ENCODE measurements at regions of chr1 and their contacts with region 1.

Region 1: GRCh38 chr1:206544562-206545257 is 37.4 kb downstream of the RASSF5 start:
- DNase-seq: peak; percentile 68 to 89 (median 81)
- ATAC-seq: peak; percentile 96
- H3K4me3 ChIP-seq: no peak overlapping the region
- H3K4me3 Mint-ChIP-seq: no peak overlapping the region
- H3K27ac ChIP-seq: no peak overlapping the region
- H3K27ac Mint-ChIP-seq: no peak overlapping the region
- H3K4me1 ChIP-seq: peaks cover 11% of the 10 kb centered on the region
- H3K4me1 Mint-ChIP-seq: peaks cover 24% of the 10 kb centered on the region
- H3K27me3 ChIP-seq: no peaks in the 10 kb centered on the region
- H3K27me3 Mint-ChIP-seq: no peaks in the 10 kb centered on the region
- CTCF ChIP-seq: peak; percentile 95

Region 2: GRCh38 chr1:206461602-206462455 is 82.9 kb before region 1 on chr1:
- CTCF ChIA-PET with region 1: interaction called, 3 read pairs
- POLR2A ChIA-PET with region 1: no interaction called
- intact Hi-C with region 1: loop called in 1 of 2 experiments (anchors 2 kb)
- DNase-seq: peak; percentile 49 to 86 (median 72)
- ATAC-seq: peak; percentile 87
- H3K4me3 ChIP-seq: no peak overlapping the region
- H3K4me3 Mint-ChIP-seq: no peak overlapping the region
- H3K27ac ChIP-seq: no peak overlapping the region
- H3K27ac Mint-ChIP-seq: peak overlapping the region; percentile 16
- H3K4me1 ChIP-seq: peaks cover 25% of the 10 kb centered on the region
- H3K4me1 Mint-ChIP-seq: peaks cover 17% of the 10 kb centered on the region
- H3K27me3 ChIP-seq: no peaks in the 10 kb centered on the region
- H3K27me3 Mint-ChIP-seq: no peaks in the 10 kb centered on the region
- CTCF ChIP-seq: peak; percentile 80

Region 3: DNA sequence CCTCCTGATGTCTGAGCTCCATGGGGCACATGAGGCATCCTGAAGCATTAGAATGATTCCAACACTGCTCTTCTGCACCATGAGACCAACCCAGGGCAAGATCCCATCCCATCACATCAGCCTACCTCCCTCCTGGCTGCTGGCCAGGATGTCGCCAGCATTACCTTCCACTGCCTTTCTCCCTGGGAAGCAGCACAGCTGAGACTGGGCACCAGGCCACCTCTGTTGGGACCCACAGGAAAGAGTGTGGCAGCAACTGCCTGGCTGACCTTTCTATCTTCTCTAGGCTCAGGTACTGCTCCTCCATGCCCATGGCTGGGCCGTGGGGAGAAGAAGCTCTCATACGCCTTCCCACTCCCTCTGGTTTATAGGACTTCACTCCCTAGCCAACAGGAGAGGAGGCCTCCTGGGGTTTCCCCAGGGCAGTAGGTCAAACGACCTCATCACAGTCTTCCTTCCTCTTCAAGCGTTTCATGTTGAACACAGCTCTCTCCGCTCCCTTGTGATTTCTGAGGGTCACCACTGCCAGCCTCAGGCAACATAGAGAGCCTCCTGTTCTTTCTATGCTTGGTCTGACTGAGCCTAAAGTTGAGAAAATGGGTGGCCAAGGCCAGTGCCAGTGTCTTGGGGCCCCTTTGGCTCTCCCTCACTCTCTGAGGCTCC is 48.4 kb before region 1 on chr1:
- CTCF ChIA-PET with region 1: interaction called, 6 read pairs
- POLR2A ChIA-PET with region 1: no interaction called
- intact Hi-C with region 1: loop called (anchors 5 to 10 kb)
- DNase-seq: peak in 1 of 14 experiments; percentile 29
- ATAC-seq: no peak
- H3K4me3 ChIP-seq: no peak overlapping the region
- H3K4me3 Mint-ChIP-seq: no peak overlapping the region
- H3K27ac ChIP-seq: peak overlapping the region in 1 of 2 donors; percentile 33
- H3K27ac Mint-ChIP-seq: peak overlapping the region; percentile 51
- H3K4me1 ChIP-seq: peaks cover 4% of the 10 kb centered on the region
- H3K4me1 Mint-ChIP-seq: no peaks in the 10 kb centered on the region
- H3K27me3 ChIP-seq: no peaks in the 10 kb centered on the region
- H3K27me3 Mint-ChIP-seq: no peaks in the 10 kb centered on the region
- CTCF ChIP-seq: no peak

Region 4: GRCh38 chr1:206575165-206575893 is 30.6 kb after region 1 on chr1:
- CTCF ChIA-PET with region 1: interaction called, 236 read pairs
- POLR2A ChIA-PET with region 1: interaction called, 14 read pairs
- intact Hi-C with region 1: no loop called
- DNase-seq: peak in 9 of 14 experiments; percentile 26 to 88 (median 56)
- ATAC-seq: peak; percentile 63
- H3K4me3 ChIP-seq: peak overlapping the region; percentile 29
- H3K4me3 Mint-ChIP-seq: peak overlapping the region; percentile 70
- H3K27ac ChIP-seq: peak overlapping the region; percentile 93 to 95
- H3K27ac Mint-ChIP-seq: peak overlapping the region; percentile 86
- H3K4me1 ChIP-seq: peaks cover 97% of the 10 kb centered on the region
- H3K4me1 Mint-ChIP-seq: peaks cover 98% of the 10 kb centered on the region
- H3K27me3 ChIP-seq: no peaks in the 10 kb centered on the region
- H3K27me3 Mint-ChIP-seq: no peaks in the 10 kb centered on the region
- CTCF ChIP-seq: no peak

Region 5: DNA sequence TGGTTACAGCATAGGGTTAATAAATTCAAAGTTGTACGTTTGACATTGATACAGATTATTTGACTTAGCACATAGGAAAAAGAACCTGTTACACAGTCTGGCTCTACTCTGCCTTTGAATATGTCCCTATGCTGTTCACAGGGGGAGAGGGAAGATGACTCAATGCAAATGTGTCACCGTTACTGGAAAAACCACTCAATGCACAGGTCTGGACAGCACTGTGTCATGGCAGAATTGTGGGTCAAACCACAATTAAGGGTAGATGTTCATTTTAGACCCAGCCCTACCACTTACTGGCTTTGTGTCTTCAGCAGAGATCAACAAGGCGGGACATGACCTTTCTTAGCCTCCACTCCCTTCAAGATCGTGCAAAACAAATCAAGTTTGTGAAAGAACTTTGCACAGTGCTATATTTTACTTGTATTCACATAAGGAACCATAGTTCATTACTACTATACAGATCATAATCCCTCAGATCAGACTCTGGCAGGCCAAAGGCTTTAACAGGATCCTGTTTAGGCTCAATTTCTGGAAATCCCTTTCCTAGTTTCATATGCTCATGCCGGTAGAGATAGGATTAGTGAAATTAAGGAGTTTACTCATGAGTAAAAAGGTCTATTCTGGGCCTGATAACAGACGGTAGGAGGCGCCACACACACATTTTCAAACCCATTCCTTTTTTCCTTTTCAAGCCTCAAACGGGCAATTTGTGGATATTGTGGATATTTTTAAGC is 45.5 kb after region 1 on chr1:
- CTCF ChIA-PET with region 1: interaction called, 236 read pairs
- POLR2A ChIA-PET with region 1: interaction called, 5 read pairs
- intact Hi-C with region 1: no loop called
- DNase-seq: peak in 10 of 14 experiments; percentile 29 to 83 (median 58)
- ATAC-seq: peak; percentile 83
- H3K4me3 ChIP-seq: no peak overlapping the region
- H3K4me3 Mint-ChIP-seq: peak overlapping the region; percentile 22
- H3K27ac ChIP-seq: peak overlapping the region; percentile 39 to 55
- H3K27ac Mint-ChIP-seq: peak overlapping the region; percentile 85
- H3K4me1 ChIP-seq: peaks cover 41% of the 10 kb centered on the region
- H3K4me1 Mint-ChIP-seq: peaks cover 43% of the 10 kb centered on the region
- H3K27me3 ChIP-seq: no peaks in the 10 kb centered on the region
- H3K27me3 Mint-ChIP-seq: no peaks in the 10 kb centered on the region
- CTCF ChIP-seq: peak; percentile 37

Region 6: DNA sequence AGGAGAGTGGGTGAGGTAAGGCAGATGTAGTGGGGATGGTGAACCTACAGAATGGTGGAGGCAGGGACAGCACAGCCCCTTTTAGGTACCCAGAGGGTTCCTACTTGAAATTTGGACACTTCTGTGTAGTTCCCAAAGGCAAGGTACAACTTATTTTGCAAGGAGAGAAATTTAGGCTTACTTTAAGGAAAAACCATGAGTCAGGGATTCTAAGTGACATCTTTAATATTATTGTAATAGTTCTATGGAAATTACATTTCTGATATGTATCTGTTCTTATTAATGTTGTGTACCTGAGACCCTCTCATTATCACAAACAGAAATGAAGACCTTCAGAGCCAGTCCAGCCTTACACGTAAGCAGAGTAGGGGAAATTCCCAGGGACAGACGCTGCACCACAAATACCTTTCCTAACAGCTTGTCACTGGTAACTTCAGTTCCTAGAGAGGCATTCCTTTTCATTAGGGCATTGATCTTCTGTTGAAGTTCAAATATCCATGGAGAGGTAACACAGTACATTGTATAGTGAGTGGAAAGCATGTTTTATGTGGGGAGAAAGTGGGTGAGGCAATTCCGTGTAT is 98.5 kb after region 1 on chr1:
- CTCF ChIA-PET with region 1: no interaction called
- POLR2A ChIA-PET with region 1: no interaction called
- intact Hi-C with region 1: no loop called
- DNase-seq: no peak
- ATAC-seq: no peak
- H3K4me3 ChIP-seq: no peak overlapping the region
- H3K4me3 Mint-ChIP-seq: no peak overlapping the region
- H3K27ac ChIP-seq: no peak overlapping the region
- H3K27ac Mint-ChIP-seq: no peak overlapping the region
- H3K4me1 ChIP-seq: no peaks in the 10 kb centered on the region
- H3K4me1 Mint-ChIP-seq: no peaks in the 10 kb centered on the region
- H3K27me3 ChIP-seq: no peaks in the 10 kb centered on the region
- H3K27me3 Mint-ChIP-seq: no peaks in the 10 kb centered on the region
- CTCF ChIP-seq: no peak

Measured in CD4-positive, alpha-beta T cell (primary cell).